A673 (cell line): ENCODE measurements at regions of chr3 and their contacts with region 1.

Region 1: DNA sequence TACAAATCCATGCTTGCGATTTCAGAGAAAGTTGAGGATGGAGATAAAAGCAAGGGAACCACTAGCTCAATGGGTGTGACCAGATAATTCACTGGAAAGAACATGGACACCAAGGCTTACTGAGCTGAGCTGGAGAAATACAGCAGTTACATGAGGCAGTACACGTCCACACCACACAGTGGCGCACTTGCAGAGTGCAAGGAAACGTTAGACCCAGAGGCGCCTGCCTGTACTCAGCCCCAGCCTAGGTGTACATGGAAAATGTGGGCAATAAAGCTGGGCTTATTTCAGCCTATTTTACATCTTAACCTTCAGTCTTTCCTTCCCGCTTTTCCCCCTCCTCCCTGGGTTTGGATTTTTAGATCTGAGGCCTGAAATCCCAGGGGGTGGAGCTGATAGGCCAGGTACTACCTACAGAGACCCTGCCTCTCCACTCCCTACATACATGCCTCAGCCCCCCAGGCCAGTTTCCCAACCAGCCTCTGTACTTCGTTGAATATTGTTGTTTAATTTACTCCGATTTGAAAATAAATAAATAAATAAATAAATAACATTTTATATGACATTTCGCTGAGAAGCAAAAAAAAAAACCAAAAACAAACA is 60.1 kb downstream of the PCOLCE2 start:
- DNase-seq: peak; percentile 77
- H3K4me3 ChIP-seq: no peak overlapping the region
- H3K27ac ChIP-seq: no peak overlapping the region
- H3K4me1 ChIP-seq: no peaks in the 10 kb centered on the region
- H3K27me3 ChIP-seq: no peaks in the 10 kb centered on the region
- CTCF ChIP-seq: peak; percentile 93

Region 2: DNA sequence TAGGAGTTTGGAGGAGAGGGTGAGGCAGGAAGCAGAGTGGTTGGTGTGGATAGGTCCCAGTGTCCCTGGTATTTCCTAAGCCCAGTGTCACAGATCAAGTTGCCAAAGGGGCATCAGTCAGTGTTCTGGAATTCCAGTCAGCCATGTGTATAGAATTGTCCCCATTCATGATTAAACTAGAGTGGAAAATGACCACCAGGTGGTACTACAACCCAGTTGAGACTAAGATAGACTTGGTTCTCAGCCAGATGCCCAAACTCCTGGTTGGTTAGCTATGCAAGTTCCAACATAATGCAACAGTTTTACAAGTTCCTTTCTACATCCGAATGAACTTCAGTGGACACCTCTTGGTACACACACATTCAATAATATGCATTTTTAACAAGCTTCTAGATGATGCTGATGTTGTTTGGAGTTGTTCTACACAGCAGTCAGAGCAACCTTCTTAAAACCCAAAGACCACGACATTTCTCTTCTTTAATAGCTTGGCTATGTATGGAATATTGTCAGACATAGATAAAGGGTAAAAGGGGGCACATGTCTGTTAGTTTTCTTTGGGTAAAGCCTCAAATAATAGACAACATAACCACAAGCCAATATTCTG is 241.9 kb before region 1 on chr3:
- CTCF ChIA-PET with region 1: interaction called, 5 read pairs
- POLR2A ChIA-PET with region 1: no interaction called
- intact Hi-C with region 1: loop called (anchors 2 kb)
- DNase-seq: peak; percentile 81
- H3K4me3 ChIP-seq: no peak overlapping the region
- H3K27ac ChIP-seq: no peak overlapping the region
- H3K4me1 ChIP-seq: no peaks in the 10 kb centered on the region
- H3K27me3 ChIP-seq: no peaks in the 10 kb centered on the region
- CTCF ChIP-seq: peak; percentile 63

Region 3: GRCh38 chr3:142857056-142857455 is 28.3 kb after region 1 on chr3:
- CTCF ChIA-PET with region 1: interaction called, 12 read pairs
- POLR2A ChIA-PET with region 1: no interaction called
- intact Hi-C with region 1: no loop called
- DNase-seq: peak; percentile 49
- H3K4me3 ChIP-seq: no peak overlapping the region
- H3K27ac ChIP-seq: no peak overlapping the region
- H3K4me1 ChIP-seq: peaks cover 5% of the 10 kb centered on the region
- H3K27me3 ChIP-seq: no peaks in the 10 kb centered on the region
- CTCF ChIP-seq: peak; percentile 34

Region 4: GRCh38 chr3:142904639-142905436 is 76.0 kb after region 1 on chr3:
- CTCF ChIA-PET with region 1: interaction called, 3 read pairs
- POLR2A ChIA-PET with region 1: no interaction called
- intact Hi-C with region 1: loop called (anchors 5 kb)
- DNase-seq: peak; percentile 7
- H3K4me3 ChIP-seq: no peak overlapping the region
- H3K27ac ChIP-seq: no peak overlapping the region
- H3K4me1 ChIP-seq: no peaks in the 10 kb centered on the region
- H3K27me3 ChIP-seq: no peaks in the 10 kb centered on the region
- CTCF ChIP-seq: peak; percentile 29; the same call in 1 of the 2 replicates

Region 5: DNA sequence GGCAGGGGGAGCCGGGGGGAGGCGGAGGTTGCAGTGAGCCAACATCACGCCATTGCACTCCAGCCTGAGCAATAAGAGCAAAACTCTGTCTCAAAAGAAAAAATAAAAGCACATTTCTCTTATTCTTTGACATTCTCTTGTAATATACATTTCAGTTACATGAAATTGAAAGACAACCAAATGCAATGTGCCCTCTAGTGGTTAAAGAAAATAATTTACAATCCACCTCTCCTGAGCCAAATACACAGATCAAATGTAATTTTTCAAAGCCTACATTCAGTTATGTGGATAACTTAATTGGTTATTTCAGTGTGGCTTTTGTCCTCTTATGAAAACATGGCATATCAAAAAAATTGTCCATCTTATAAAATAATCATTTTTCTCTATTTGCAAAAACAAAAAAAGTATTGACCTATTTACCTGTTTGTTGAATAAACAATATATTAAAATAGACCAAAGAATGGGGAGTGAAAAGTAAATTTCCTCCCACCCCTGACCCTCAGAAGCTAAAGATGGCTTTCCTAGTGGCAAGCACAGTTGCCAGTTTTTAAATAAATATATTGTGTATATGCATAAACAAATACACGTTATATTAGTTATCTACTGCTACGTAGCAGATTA is 158.4 kb after region 1 on chr3:
- CTCF ChIA-PET with region 1: interaction called, 8 read pairs
- POLR2A ChIA-PET with region 1: no interaction called
- intact Hi-C with region 1: loop called (anchors 1 kb)
- DNase-seq: peak; percentile 60
- H3K4me3 ChIP-seq: no peak overlapping the region
- H3K27ac ChIP-seq: no peak overlapping the region
- H3K4me1 ChIP-seq: no peaks in the 10 kb centered on the region
- H3K27me3 ChIP-seq: no peaks in the 10 kb centered on the region
- CTCF ChIP-seq: peak; percentile 69

Region 6: GRCh38 chr3:142993958-142994442 is 165.2 kb after region 1 on chr3:
- CTCF ChIA-PET with region 1: interaction called, 9 read pairs
- POLR2A ChIA-PET with region 1: interaction called, 3 read pairs
- intact Hi-C with region 1: loop called (anchors 2 kb)
- DNase-seq: peak; percentile 79
- H3K4me3 ChIP-seq: no peak overlapping the region
- H3K27ac ChIP-seq: no peak overlapping the region
- H3K4me1 ChIP-seq: no peaks in the 10 kb centered on the region
- H3K27me3 ChIP-seq: no peaks in the 10 kb centered on the region
- CTCF ChIP-seq: peak; percentile 78